H1 (cell line): ENCODE measurements at regions of chr19 and their contacts with region 1.

Region 1: DNA sequence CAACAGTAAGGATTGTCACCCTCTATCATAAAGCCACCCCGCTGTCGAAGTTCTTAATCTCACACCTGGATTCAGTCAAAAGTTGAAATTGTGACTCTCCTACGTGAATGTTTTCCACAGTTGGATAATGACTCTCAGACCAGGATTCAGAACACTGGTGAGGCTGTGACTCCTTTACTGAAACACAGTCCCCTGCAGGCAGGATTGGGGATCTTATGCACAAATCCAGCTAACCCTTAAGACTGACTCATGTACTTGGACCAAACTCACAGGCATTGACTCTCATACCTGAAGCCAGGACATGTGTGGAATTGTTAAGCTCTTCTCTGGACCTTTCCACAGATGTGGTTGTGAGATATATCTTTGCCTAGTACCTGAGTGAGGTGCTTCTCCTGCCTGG is 46.8 kb downstream of the ZNF85 start:
- DNase-seq: no peak
- H3K4me3 ChIP-seq: no peak overlapping the region
- H3K27ac ChIP-seq: no peak overlapping the region
- H3K4me1 ChIP-seq: no peaks in the 10 kb centered on the region
- H3K27me3 ChIP-seq: no peaks in the 10 kb centered on the region
- CTCF ChIP-seq: no peak
- EP300 ChIP-seq: no peak
- POLR2A ChIP-seq: no peak
- RAD21 ChIP-seq: no peak

Region 2: DNA sequence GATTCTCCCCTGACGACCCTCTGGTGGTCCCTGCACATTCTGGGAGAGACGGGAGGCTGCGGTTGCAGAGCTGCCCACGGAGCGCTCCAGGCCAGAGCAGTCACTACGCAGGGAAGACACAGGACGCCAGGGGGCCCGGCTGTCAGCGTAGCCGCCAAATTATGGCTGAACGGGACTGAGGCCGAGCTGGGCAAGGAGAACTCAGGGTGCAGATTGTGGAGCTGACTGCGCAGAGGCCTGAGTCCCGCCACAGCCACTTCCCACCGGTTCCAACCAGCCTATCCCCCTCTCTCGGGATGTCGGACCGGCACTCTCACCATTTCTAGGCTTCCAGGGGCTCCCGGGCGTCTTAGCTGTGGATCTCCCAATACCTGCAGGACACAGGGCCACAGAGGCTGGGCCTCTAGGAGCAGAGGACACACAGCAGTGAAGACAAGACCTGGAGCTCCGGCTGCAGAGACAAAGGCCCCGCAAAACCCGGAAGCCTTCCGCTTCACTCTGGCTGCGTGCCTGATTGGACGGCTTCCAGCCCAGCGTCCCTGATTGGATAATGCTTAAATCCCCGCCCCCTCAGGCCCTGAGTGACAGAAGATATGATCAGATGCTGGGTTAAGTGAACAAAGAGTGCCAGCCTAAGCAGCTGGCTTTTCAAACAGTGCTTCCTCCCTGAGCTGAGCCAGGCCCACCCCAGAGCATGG is 404.4 kb before region 1 on chr19 and contains the start of gene ZNF737:
- CTCF ChIA-PET with region 1: interaction called, 11 read pairs
- POLR2A ChIA-PET with region 1: no interaction called
- DNase-seq: peak; percentile 87 to 90
- H3K4me3 ChIP-seq: peak within 1 kb of the TSS; percentile 82 to 94 (median 86)
- H3K27ac ChIP-seq: peak within 1 kb of the TSS; percentile 93
- H3K4me1 ChIP-seq: no peaks in the 10 kb centered on the region; a peak in 1 of 7 replicates
- H3K27me3 ChIP-seq: no peaks in the 10 kb centered on the region
- CTCF ChIP-seq: peak in 1 of 3 experiments; percentile 16; a peak in 1 of 4 replicates
- EP300 ChIP-seq: no peak
- POLR2A ChIP-seq: peak; percentile 71 to 85
- RAD21 ChIP-seq: peak; percentile 17 to 28; a peak in 2 of 4 replicates
- total RNA-seq, gene ZNF737: 17.1 and 19.7 TPM in 2 replicates

Region 3: GRCh38 chr19:21020298-21021227 is 50.7 kb after region 1 on chr19 and contains the start of gene ZNF430:
- CTCF ChIA-PET with region 1: no interaction called
- POLR2A ChIA-PET with region 1: no interaction called
- DNase-seq: peak; percentile 91 to 95
- H3K4me3 ChIP-seq: peak within 1 kb of the TSS; percentile 59 to 96 (median 90)
- H3K27ac ChIP-seq: peak within 1 kb of the TSS; percentile 71
- H3K4me1 ChIP-seq: peaks cover 0 to 2% (median 0%) of the 10 kb centered on the region in 4 experiments; a peak in 1 of 7 replicates
- H3K27me3 ChIP-seq: no peaks in the 10 kb centered on the region
- CTCF ChIP-seq: no peak
- EP300 ChIP-seq: no peak
- POLR2A ChIP-seq: peak in 1 of 2 experiments; percentile 87; a peak in 2 of 3 replicates
- RAD21 ChIP-seq: no peak
- total RNA-seq, gene ZNF430: 10.1 and 16.1 TPM in 2 replicates